Psoas muscle (tissue), 8 donors: ENCODE measurements at regions of chr14 and their contacts with region 1.

Region 1: GRCh38 chr14:56117765-56118610 is at the start of gene PELI2:
- DNase-seq: peak; percentile 77 to 87
- ATAC-seq: peak; percentile 76 to 85 (median 78)
- H3K4me3 ChIP-seq: peak within 1 kb of the TSS; percentile 89
- H3K27ac ChIP-seq: peak within 1 kb of the TSS; percentile 80
- H3K4me1 ChIP-seq: no peaks in the 10 kb centered on the region
- H3K27me3 ChIP-seq: no peaks in the 10 kb centered on the region
- CTCF ChIP-seq: no peak
- total RNA-seq, gene PELI2: 1.9 to 2.9 (median 2.4) TPM

Region 2: DNA sequence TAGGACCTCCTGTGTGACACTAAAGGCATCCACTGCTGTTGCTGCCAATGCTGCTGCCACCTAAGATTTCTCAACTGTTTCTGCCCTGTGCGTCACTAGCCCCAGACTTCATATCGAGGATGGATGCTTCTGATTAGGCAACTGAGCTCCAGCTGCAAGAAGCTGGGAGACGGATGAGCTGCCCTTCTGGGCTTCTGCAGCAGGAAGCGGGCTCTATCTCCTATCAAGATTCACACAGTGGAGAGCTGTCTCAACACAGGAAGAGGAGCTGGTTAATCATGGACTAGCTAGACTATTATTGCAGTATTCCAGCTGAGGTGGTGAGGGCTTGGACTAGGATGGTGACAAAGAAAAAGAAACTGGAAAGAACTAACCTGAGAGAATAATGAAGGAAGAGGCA is 58.9 kb before region 1 on chr14:
- intact Hi-C with region 1: no loop called
- DNase-seq: no peak
- ATAC-seq: no peak
- H3K4me3 ChIP-seq: no peak overlapping the region
- H3K27ac ChIP-seq: no peak overlapping the region
- H3K4me1 ChIP-seq: no peaks in the 10 kb centered on the region
- H3K27me3 ChIP-seq: peaks cover 0 to 9% (median under 1%) of the 10 kb centered on the region in 3 donors
- CTCF ChIP-seq: no peak

Region 3: GRCh38 chr14:56100556-56100955 is 17.4 kb before region 1 on chr14:
- intact Hi-C with region 1: no loop called
- DNase-seq: no peak
- ATAC-seq: no peak
- H3K4me3 ChIP-seq: no peak overlapping the region
- H3K27ac ChIP-seq: no peak overlapping the region
- H3K4me1 ChIP-seq: no peaks in the 10 kb centered on the region
- H3K27me3 ChIP-seq: peaks cover 0 to 4% (median 0%) of the 10 kb centered on the region in 3 donors
- CTCF ChIP-seq: no peak

Region 4: DNA sequence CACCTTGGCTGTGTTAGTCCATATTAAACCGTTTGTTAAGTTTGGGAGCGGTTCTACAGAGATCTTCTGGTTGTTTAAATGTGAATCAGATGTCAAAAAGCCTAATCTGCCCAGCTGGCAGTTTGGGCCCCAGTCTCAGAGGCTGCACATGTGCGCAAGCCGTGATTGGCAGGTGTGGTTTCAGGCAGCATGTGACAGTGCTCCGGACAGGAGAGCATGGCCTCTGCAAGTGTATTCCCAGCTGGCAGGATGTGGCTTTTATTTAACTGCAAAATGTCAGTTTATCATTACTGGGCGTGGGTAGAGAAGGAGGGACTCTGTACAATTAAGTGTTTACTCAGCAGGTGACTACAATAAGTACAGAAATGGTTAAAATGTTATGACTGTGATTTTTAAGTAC is 77.7 kb after region 1 on chr14:
- intact Hi-C with region 1: loop called in 1 of 2 experiments (anchors 5 kb)
- DNase-seq: no peak
- ATAC-seq: peak in 3 of 4 donors; percentile 63 to 83 (median 69)
- H3K4me3 ChIP-seq: peak overlapping the region; percentile 7
- H3K27ac ChIP-seq: peak overlapping the region; percentile 47
- H3K4me1 ChIP-seq: peaks cover 21% of the 10 kb centered on the region
- H3K27me3 ChIP-seq: no peaks in the 10 kb centered on the region
- CTCF ChIP-seq: no peak

Region 5: GRCh38 chr14:56339855-56340701 is 222.1 kb after region 1 on chr14:
- intact Hi-C with region 1: loop called in 1 of 2 experiments (anchors 2 kb)
- DNase-seq: peak; percentile 73 to 84
- ATAC-seq: peak; percentile 80 to 91 (median 84)
- H3K4me3 ChIP-seq: no peak overlapping the region
- H3K27ac ChIP-seq: no peak overlapping the region
- H3K4me1 ChIP-seq: peaks cover 20% of the 10 kb centered on the region
- H3K27me3 ChIP-seq: no peaks in the 10 kb centered on the region
- CTCF ChIP-seq: peak; percentile 77

Region 6: GRCh38 chr14:56666716-56667115 is 548.7 kb after region 1 on chr14:
- intact Hi-C with region 1: no loop called
- DNase-seq: no peak
- ATAC-seq: no peak
- H3K4me3 ChIP-seq: no peak overlapping the region
- H3K27ac ChIP-seq: no peak overlapping the region
- H3K4me1 ChIP-seq: no peaks in the 10 kb centered on the region
- H3K27me3 ChIP-seq: peaks cover 0 to 3% (median 0%) of the 10 kb centered on the region in 3 donors
- CTCF ChIP-seq: no peak

Region 7: DNA sequence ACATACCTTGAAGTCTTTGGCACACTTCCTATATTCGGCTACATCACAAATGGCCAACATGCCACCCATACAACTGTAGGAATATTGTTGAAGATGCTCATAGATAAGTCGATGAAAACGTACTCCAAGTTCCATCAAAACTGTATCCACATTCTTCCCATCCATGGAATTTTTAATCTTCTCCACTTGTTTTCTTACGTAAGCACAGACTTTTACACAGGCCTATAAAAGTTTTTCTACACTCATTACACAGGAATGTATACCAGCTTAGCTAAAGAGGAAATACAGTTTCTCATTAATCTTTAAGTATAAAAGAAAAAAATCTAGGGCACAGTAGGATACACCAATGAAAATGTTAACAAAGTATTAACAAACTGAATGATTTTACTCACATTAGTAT is 1091.6 kb after region 1 on chr14:
- intact Hi-C with region 1: no loop called
- DNase-seq: no peak
- ATAC-seq: no peak
- H3K4me3 ChIP-seq: no peak overlapping the region
- H3K27ac ChIP-seq: no peak overlapping the region
- H3K4me1 ChIP-seq: no peaks in the 10 kb centered on the region
- H3K27me3 ChIP-seq: no peaks in the 10 kb centered on the region
- CTCF ChIP-seq: no peak